Gastrocnemius medialis (tissue), 4 donors: ENCODE measurements at regions of chr7 and their contacts with region 1.

Region 1: DNA sequence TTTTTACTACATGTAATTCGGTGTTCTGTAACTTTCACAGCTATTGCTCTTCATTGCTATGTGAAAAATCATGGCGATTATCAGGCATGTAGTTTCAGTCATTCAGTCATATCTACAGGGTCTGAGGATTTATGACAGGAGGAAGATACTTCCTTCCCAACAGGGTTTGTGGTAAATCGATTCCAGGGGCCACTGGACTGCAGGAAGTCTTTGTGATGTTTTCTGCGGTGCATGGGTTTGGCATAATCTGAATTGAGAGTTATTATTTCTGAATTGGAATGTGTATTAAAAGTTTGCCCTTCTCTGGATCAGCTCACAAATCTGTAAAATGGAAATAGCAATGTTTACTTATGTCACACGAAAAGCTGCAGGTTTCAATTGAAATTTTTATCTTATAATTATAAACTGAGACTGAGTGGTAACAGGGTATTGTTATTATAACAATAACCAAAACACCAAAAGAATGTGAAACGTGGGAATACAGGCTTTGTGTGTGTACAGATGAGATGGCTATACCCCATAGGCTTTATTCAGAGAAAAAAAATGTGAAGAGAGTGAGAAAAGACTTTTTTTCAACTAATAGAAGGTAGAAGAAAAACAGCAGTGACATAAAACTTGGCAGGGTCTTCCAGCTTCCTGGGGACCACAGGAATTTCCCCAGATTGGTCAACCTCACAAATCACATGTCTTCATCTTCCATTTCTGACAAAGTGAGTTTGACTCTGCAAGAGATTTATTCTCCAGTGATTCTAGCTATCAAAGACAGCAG is 307.7 kb upstream of the NFE2L3 start:
- DNase-seq: no peak
- ATAC-seq: no peak
- H3K4me3 ChIP-seq: no peak overlapping the region
- H3K27ac ChIP-seq: peak overlapping the region in 1 of 4 donors; percentile 91
- H3K4me1 ChIP-seq: peaks cover 75 to 78% of the 10 kb centered on the region in 2 donors
- H3K27me3 ChIP-seq: no peaks in the 10 kb centered on the region
- CTCF ChIP-seq: no peak
- POLR2A ChIP-seq: no peak

Region 2: GRCh38 chr7:24778543-24779282 is 1065.6 kb before region 1 on chr7:
- in situ Hi-C with region 1: no loop called
- intact Hi-C with region 1: loop called (anchors 5 kb)
- DNase-seq: peak; percentile 63 to 84
- ATAC-seq: peak; percentile 98 to 99
- H3K4me3 ChIP-seq: no peak overlapping the region
- H3K27ac ChIP-seq: peak overlapping the region; percentile 77 to 85 (median 82)
- H3K4me1 ChIP-seq: peaks cover 15 to 18% of the 10 kb centered on the region in 2 donors
- H3K27me3 ChIP-seq: no peaks in the 10 kb centered on the region
- CTCF ChIP-seq: no peak
- POLR2A ChIP-seq: peak; percentile 28 to 40

Region 3: DNA sequence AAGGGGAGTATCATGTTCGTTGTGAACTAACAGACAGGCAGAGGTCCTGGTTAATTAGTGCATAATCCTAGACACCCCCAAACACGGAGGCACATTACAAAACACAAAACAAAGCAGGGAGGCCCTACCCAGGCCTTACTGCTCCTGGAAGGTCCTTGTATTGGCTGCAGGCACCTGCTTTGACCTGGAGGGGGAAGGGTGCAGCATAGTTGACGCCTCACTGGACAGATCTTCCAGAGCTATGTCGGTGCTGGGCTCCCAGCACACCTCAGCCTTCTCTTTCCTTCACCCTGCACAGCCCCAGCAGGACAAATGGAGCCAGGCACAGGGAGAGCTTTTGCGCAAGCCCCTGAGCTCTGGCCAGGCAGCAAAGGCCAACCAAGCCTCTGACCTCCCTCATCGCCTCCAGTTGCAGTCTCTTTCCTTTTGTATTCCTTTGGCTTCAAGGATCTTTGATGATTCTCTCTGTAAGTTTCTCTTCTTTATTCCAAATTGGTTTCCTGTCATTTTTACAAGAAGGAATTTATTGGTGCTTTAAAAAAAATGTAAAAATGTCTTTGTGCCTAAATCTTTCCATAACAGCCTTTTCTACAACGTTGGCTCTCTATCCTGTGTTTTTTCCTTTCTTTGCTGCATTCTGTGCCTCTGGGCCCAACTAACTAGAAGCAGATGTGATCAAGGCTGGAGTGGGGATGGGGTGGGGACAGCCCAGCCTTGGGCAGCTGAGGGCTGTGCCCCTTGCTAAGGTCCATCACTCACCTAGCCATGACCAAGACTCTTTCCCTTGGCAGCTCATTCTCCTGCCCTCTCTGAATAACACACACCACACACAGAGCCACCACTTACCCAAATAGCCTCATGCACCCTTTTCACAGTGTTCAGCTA is 298.9 kb before region 1 on chr7:
- in situ Hi-C with region 1: no loop called
- intact Hi-C with region 1: no loop called
- DNase-seq: no peak
- ATAC-seq: no peak
- H3K4me3 ChIP-seq: no peak overlapping the region
- H3K27ac ChIP-seq: no peak overlapping the region
- H3K4me1 ChIP-seq: no peaks in the 10 kb centered on the region
- H3K27me3 ChIP-seq: no peaks in the 10 kb centered on the region
- CTCF ChIP-seq: no peak
- POLR2A ChIP-seq: no peak

Region 4: DNA sequence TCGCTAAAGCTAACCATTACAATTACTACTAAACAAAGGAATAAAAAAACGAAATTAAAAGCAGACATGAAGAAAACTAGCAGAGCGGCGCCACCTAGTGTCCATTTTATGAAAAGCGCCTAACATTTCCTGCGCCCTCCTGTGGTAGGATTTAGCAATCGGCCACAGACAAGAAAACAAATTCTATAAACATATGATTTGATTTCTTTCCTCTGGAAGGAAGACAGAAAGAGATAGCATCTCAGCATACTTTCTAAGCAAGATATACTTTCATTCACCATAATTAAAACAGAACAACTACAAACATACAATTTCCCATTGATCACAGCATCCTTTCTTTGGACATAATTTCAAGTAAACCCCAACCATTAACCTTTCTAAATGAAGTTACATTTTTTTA is 278.3 kb before region 1 on chr7:
- in situ Hi-C with region 1: no loop called
- intact Hi-C with region 1: no loop called
- DNase-seq: peak; percentile 38 to 49
- ATAC-seq: peak; percentile 40 to 76
- H3K4me3 ChIP-seq: peak overlapping the region in 1 of 4 donors; percentile 30
- H3K27ac ChIP-seq: no peak overlapping the region
- H3K4me1 ChIP-seq: peaks cover 13 to 21% of the 10 kb centered on the region in 2 donors
- H3K27me3 ChIP-seq: no peaks in the 10 kb centered on the region
- CTCF ChIP-seq: peak; percentile 91 to 100 (median 99)
- POLR2A ChIP-seq: no peak

Region 5: DNA sequence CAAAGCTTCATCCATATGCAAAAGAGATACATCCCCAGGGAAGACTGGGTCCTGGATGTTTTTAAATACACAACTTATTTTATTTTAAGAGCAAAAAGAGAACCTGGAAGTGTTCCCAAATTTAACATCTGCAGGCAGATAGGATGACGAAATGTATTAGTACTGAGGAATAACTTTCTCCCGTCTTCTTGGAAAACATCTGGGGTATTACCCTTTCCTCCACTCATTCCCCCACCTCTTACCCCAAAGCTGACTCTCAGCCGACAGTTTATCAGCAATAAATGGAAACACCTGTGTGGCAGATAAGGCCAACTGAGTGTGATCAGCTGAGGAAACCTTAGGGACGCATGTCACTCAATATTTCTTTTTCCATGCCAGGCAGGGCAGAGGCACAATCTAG is 180.4 kb before region 1 on chr7:
- in situ Hi-C with region 1: loop called in 2 of 4 experiments (anchors 5 kb)
- intact Hi-C with region 1: no loop called
- DNase-seq: no peak
- ATAC-seq: peak in 1 of 2 donors; percentile 10
- H3K4me3 ChIP-seq: no peak overlapping the region
- H3K27ac ChIP-seq: peak overlapping the region; percentile 65 to 89 (median 80)
- H3K4me1 ChIP-seq: peaks cover 34 to 53% of the 10 kb centered on the region in 2 donors
- H3K27me3 ChIP-seq: no peaks in the 10 kb centered on the region
- CTCF ChIP-seq: no peak
- POLR2A ChIP-seq: no peak

Region 6: GRCh38 chr7:25669961-25670841 is 174.1 kb before region 1 on chr7:
- in situ Hi-C with region 1: loop called in 1 of 4 experiments (anchors 5 kb)
- intact Hi-C with region 1: loop called (anchors 1 kb)
- DNase-seq: peak; percentile 71 to 77
- ATAC-seq: peak; percentile 94 to 95
- H3K4me3 ChIP-seq: peak overlapping the region in 1 of 4 donors; percentile 8
- H3K27ac ChIP-seq: peak overlapping the region; percentile 59 to 90 (median 70)
- H3K4me1 ChIP-seq: peaks cover 21 to 39% of the 10 kb centered on the region in 2 donors
- H3K27me3 ChIP-seq: no peaks in the 10 kb centered on the region
- CTCF ChIP-seq: no peak
- POLR2A ChIP-seq: no peak

Region 7: DNA sequence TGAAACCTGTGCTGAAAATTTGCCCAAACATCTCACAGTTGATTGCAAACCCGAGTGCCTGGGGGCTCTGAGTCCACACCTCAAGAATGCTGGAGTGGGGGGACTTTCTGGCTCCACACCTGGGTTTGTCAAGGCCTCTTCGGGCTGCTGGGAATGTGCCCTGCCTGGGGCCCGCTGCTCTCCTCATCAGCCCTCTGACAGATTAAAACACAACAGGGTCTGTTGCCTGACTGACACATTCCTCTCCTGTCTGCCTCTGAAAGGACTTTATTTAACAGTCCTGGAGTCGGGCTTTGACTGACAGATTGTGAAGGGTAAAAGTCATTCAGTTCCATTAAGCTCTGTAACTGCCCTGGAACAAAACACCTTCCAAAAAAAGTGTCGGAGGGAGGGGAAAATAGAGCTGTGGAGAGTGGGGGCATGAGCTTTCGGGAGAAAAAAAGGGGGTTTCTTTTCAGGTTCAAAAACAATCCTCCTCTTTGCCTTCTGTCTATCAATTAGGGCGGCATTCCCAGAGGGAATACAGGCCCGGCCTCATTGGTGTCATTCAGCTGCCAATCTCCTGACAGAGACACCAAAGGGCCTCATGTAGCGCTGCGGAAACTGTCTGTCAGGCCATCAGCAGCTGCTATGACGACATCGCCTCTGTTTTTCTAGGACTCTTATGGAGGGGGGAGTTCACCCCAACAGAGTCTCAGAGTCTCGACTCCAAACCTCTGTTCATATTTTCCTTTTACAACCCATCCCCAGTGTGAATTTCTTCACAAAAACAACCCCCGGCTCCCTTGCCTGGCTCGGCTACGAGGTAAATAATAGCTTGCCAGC is 91.1 kb before region 1 on chr7:
- in situ Hi-C with region 1: loop called in 1 of 4 experiments (anchors 10 kb)
- intact Hi-C with region 1: loop called (anchors 5 kb)
- DNase-seq: peak; percentile 59 to 60
- ATAC-seq: peak; percentile 51 to 68
- H3K4me3 ChIP-seq: no peak overlapping the region
- H3K27ac ChIP-seq: peak overlapping the region; percentile 86 to 94 (median 90)
- H3K4me1 ChIP-seq: peaks cover 38 to 61% of the 10 kb centered on the region in 2 donors
- H3K27me3 ChIP-seq: no peaks in the 10 kb centered on the region
- CTCF ChIP-seq: no peak
- POLR2A ChIP-seq: no peak

Region 8: DNA sequence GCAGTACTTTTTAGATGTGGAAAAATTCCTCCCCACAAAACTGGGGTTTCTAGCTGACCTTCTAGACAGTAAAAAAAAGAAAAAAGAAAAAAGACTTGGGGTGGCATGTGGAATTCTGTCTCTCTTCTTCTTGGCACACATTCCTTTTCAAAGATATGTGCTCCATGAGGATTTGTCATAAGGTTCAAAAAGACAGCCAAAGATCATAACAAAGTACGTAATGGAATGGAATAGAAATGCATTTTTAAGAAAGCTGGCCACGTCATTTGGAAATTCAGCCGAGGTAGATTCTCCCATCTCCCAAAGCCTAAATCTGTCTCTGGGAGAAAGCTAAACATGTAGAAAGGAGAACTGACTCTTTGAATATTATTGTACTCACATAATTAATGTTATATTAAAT is 73.6 kb before region 1 on chr7:
- in situ Hi-C with region 1: loop called in 1 of 4 experiments (anchors 5 kb)
- intact Hi-C with region 1: loop called (anchors 2 kb)
- DNase-seq: no peak
- ATAC-seq: no peak
- H3K4me3 ChIP-seq: no peak overlapping the region
- H3K27ac ChIP-seq: peak overlapping the region; percentile 50 to 78 (median 62)
- H3K4me1 ChIP-seq: peaks cover 27 to 32% of the 10 kb centered on the region in 2 donors
- H3K27me3 ChIP-seq: no peaks in the 10 kb centered on the region
- CTCF ChIP-seq: no peak
- POLR2A ChIP-seq: no peak

Region 9: DNA sequence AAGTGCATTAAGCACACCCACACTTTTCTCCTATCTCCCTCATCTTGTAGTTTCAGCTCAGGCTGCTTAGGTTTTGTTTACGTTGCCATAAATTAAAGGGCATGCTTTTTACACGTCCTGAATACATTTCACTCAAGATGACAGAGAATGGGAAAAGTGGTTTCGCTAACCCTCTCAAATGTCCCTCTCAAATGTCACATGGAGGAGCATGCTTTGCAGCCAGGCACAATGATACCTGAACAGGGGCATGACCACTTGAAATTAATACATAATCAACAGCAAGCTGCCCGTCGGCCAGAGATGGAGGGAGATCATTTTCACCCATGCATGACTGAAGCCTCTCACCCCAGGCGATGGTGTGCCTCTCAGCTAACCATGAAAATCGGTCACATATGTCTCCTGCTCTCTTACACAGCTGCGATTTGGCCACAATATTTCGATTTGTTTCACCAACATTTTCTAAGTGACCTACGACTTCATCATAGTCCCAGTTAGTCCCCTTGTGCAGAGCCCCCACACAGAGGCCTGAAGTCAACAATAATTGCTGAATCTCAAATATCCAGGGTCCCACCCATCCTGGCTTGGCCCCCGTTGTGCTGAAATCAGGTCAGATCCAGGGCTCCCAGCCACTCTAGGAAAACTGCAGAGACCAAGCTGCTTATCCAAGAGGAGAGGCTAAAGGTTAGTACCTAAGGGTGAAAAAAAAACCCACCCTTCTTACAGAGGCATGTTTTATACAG is 66.1 kb before region 1 on chr7:
- in situ Hi-C with region 1: loop called in 1 of 4 experiments (anchors 5 kb)
- intact Hi-C with region 1: no loop called
- DNase-seq: peak; percentile 39 to 77
- ATAC-seq: peak; percentile 66 to 84
- H3K4me3 ChIP-seq: no peak overlapping the region
- H3K27ac ChIP-seq: peak overlapping the region; percentile 63 to 84 (median 68)
- H3K4me1 ChIP-seq: peaks cover 23 to 36% of the 10 kb centered on the region in 2 donors
- H3K27me3 ChIP-seq: no peaks in the 10 kb centered on the region
- CTCF ChIP-seq: no peak
- POLR2A ChIP-seq: no peak